Heart left ventricle (tissue), 16 donors: ENCODE measurements at regions of chr1 and their contacts with region 1.

Region 1: DNA sequence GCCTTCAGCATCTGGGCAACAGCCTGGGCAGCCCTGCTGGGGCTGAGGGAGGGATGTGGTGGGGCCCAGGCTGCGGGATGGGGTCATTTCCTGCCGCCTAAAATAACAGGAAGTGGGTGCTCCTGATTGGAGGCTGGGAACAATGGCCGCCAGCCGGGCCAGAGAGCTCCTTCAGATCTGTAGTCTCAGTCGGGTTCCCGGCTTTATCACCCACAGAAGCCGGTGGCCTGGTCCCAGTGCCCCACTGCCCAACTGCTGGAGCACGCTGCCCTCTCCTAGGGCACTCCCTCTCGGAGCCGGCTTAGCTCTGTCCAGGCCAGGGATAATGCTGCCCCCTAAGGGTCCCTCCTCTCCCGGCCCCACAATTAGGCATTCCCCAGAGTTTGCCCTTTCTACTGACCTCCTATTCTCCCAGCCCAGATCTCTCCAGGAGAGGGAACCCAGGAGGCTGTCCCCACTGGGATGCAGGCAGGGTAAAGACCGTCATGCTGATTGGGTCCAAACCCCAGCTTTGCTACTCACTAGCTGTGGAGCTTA is 5.1 kb downstream of the MAP7D1 start:
- DNase-seq: peak; percentile 75 to 85 (median 78)
- ATAC-seq: peak; percentile 22 to 68 (median 34)
- H3K4me3 ChIP-seq: peak overlapping the region; percentile 15 to 62 (median 50)
- H3K27ac ChIP-seq: peak overlapping the region; percentile 79 to 100 (median 96)
- H3K4me1 ChIP-seq: peaks cover 29 to 87% (median 73%) of the 10 kb centered on the region in 12 donors
- H3K27me3 ChIP-seq: no peaks in the 10 kb centered on the region
- CTCF ChIP-seq: peak in 9 of 12 donors; percentile 13 to 55 (median 35)
- POLR2A ChIP-seq: no peak

Region 2: DNA sequence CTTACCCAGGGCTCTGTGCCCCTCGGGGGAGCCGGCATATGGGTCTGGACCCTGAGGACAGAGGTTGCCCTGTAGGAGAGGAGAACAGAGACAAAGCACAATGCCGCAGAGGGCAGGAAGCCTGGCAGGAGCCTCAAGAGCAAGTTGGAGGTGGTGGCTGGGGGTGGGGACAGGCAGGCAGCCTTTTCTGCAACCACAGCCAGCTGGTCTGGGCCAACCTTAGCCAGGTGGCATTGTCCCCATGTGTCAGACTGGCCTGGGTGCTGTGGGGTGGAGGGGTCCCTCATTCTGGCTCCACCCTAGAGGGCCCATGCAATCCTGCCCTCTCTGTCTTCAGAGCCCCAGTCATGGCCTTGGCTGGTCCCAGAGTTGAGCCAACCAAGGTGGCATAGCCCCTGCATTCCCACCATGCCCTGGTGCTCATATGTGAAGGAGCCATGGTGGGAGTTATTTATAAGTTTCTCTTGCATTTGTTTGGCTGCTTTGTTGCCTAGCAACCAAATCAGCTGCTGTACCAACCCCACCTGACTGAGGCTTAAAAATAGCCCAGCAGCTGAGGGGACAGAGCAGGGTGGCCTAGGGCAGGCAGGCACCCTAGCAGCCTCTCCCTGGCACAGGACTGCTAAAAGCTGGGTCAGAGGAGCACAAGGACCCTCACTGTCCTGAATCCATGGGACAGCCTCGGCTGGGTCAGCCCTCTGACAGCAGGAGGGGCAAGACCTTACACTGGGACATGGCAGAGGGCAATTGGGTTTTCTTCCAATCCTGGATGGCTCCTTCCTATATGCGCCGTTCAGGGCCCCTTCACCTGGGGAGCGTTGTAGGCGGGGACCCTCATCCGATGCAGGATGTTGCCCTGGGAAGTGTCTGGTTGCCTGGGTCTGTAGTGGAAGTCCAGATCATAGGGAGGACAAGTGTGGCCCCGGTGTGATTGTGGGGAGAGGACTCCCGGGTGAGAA is 14.4 kb after region 1 on chr1:
- intact Hi-C with region 1: loop called in 1 of 10 experiments (anchors 2 kb)
- DNase-seq: peak; percentile 66 to 88 (median 82)
- ATAC-seq: peak; percentile 80 to 88 (median 84)
- H3K4me3 ChIP-seq: peak overlapping the region in 2 of 12 donors; percentile 13 to 20
- H3K27ac ChIP-seq: peak overlapping the region; percentile 74 to 100 (median 90)
- H3K4me1 ChIP-seq: peaks cover 0 to 85% (median 51%) of the 10 kb centered on the region in 12 donors
- H3K27me3 ChIP-seq: no peaks in the 10 kb centered on the region
- CTCF ChIP-seq: no peak
- POLR2A ChIP-seq: peak in 1 of 2 donors; percentile 58

Region 3: DNA sequence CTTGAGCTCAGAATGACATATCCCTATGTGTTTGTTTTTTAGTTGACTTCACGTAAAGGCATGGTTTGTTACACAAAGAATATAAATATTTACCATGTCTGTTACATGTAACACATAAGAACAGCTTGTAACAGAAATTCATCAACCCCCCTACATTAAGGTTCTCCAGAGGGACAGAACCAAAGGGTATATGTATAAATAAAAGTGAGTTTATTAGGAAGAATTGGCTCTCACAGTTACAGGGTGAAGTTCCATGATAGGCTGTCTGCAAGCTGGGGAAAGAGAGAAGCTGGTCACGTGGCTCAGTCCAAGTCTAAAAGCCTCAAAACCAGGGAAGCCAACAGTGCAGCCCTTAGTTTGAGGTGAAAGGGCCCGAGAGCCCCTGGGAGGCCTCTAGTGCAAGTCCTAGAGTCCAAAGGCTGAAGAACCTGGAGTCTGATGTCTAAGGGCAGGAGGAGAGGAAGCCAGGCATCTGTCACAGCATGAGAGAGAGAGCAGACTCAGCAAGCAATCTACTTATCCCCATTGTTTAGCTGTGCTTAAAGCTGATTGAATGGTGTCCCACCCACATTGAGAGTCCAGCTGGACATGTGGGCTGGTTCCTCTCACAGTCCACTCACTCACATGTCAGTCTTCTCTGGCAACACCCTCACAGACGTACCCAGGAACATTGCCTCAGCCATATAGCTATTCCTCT is 79.1 kb after region 1 on chr1:
- intact Hi-C with region 1: no loop called
- DNase-seq: peak in 4 of 5 donors; percentile 63 to 81 (median 79)
- ATAC-seq: peak; percentile 93 to 98 (median 96)
- H3K4me3 ChIP-seq: no peak overlapping the region
- H3K27ac ChIP-seq: peak overlapping the region in 11 of 12 donors; percentile 24 to 72 (median 60)
- H3K4me1 ChIP-seq: peaks cover 0 to 82% (median 67%) of the 10 kb centered on the region in 12 donors
- H3K27me3 ChIP-seq: no peaks in the 10 kb centered on the region
- CTCF ChIP-seq: no peak
- POLR2A ChIP-seq: no peak

Region 4: DNA sequence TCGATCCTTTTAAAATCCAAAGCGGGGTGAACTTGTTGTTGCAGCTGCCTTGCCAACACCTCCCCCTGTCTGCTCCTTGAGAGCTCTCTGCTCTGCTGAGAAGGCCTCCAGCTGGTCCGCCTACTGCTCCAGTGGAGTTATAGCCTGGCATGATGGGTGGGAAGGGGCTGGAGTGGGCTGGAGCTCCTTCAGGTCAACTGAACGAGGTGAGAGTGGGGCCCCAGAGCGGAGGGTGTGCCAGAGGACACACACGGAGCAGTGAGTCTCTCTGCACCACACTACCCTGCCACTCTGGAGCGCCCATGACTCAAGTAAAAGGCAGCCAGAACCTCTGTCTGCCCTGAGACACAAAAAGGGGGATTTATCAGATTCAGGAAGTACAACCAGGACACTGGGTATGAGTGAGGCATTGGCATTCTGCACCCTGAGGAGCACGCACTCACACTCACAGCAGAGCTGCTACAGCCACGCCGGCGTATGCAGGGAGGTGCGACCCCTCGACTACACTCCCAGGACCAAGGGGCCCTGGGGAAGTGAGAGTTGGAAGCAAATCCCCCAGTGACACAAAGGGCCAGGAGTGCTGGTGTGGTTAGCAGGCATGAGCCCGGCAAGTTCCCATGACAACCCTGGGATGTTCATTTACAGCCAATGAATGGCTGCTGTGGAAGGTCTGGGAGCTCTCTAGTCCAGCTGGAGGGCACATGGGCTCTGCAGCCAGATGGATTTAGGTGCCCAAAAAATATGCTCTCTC is 190.4 kb after region 1 on chr1:
- intact Hi-C with region 1: no loop called
- DNase-seq: peak in 1 of 5 donors; percentile 54
- ATAC-seq: peak in 3 of 4 donors; percentile 4 to 21 (median 15)
- H3K4me3 ChIP-seq: no peak overlapping the region
- H3K27ac ChIP-seq: peak overlapping the region in 10 of 12 donors; percentile 13 to 82 (median 48)
- H3K4me1 ChIP-seq: peaks cover 0 to 44% (median 28%) of the 10 kb centered on the region in 12 donors
- H3K27me3 ChIP-seq: no peaks in the 10 kb centered on the region
- CTCF ChIP-seq: peak in 2 of 12 donors; percentile 10 to 13
- POLR2A ChIP-seq: no peak

Region 5: GRCh38 chr1:36385410-36386257 is 224.6 kb after region 1 on chr1 and contains the start of gene STK40:
- intact Hi-C with region 1: no loop called
- DNase-seq: peak; percentile 98 to 99 (median 99)
- ATAC-seq: peak; percentile 89 to 96 (median 94)
- H3K4me3 ChIP-seq: peak within 1 kb of the TSS; percentile 70 to 98 (median 91)
- H3K27ac ChIP-seq: peak within 1 kb of the TSS; percentile 93 to 99 (median 97)
- H3K4me1 ChIP-seq: peaks cover 10 to 84% (median 59%) of the 10 kb centered on the region in 12 donors
- H3K27me3 ChIP-seq: no peaks in the 10 kb centered on the region
- CTCF ChIP-seq: no peak
- POLR2A ChIP-seq: peak; percentile 76 to 92
- total RNA-seq, gene STK40: 50.4 to 114 (median 59.4) TPM